Activated T-helper 1 cell treated with anti-CD3 and anti-CD28 coated beads, Interleukin-12 subunit alpha, Interleukin-12 subunit beta, Interleukin-2, Interleukin-4 antibody, amounts not matched to agents 30 ng/mL and 10 ng/mL and 1 ng/mL, durations not matched to agents 14 hours and 24 hours and 36 hours (primary cell): ENCODE measurements at regions of chr11 and their contacts with region 1.

Region 1: DNA sequence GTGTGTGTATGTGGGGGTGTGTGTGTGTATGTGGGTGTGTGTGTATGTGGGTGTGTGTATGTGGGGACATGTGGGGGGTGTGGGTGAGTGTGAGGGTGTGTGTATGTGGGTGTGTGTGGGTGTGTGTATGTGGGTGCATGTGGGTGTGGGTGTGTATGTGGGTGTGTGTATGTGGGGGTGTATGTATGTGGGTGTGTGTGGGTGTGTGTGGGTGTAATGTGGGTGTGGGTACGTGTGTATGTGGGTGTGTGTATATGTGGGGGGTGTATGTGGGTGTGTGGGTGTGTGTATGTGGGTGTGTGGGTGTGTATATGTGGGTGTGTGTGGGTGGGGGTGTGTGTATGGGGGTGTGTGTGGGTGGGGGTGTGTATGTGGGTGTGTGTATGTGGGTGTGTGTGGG is 106.7 kb downstream of the SPATA19 start:
- DNase-seq: no peak
- H3K4me3 Mint-ChIP-seq: no peak overlapping the region
- H3K27ac Mint-ChIP-seq: peak overlapping the region; percentile 53
- H3K4me1 Mint-ChIP-seq: no peaks in the 10 kb centered on the region
- H3K27me3 Mint-ChIP-seq: no peaks in the 10 kb centered on the region

Region 2: DNA sequence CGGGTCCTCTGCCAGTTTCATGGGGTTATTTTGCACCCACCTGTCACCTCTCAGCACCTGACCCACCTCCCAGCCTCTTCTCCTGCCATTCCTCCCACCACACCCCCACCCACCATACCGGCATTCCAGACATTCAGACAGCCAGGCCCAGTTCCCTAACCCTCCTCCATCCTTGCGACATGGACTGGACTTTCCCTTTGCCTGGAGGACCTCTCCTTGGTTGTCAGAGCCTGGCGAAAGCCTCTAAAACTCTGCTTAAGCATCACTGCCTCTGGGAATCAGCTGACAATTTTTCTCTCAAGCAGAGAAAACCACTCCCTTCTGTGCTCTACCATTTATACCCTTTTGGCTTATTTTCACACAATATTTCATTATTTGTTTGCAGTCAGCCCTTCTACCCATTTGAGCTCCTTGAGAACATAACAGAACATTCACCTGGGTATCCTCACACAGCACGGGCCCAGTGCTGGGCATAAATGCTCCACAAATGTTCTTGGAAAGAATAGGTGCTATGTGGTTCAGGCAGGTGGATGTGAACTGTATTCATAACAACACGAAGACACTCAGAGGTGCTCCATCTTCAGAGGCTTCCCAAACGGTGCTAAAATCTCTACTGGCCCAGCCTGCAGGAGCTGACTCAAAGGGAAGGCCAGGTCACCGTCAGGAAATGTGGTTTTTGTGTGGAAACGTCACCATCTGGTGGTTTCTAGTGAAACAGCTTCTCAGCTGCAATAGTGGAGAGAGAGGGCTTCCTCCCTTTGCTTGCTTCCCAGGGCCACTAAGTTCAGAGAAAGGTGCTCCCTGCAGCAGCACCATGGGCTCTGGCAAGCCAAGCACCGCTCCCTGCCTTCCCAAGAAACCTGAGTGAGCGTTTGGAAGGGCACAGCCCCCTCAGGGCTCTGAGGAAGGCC is 96.3 kb after region 1 on chr11:
- intact Hi-C with region 1: loop called (anchors 5 kb)
- DNase-seq: peak; percentile 48
- H3K4me3 Mint-ChIP-seq: no peak overlapping the region
- H3K27ac Mint-ChIP-seq: no peak overlapping the region
- H3K4me1 Mint-ChIP-seq: peaks cover 5% of the 10 kb centered on the region
- H3K27me3 Mint-ChIP-seq: peaks cover 4% of the 10 kb centered on the region